ENCODE measurements at regions of chr10 and their contacts with region 1.

Region 1: DNA sequence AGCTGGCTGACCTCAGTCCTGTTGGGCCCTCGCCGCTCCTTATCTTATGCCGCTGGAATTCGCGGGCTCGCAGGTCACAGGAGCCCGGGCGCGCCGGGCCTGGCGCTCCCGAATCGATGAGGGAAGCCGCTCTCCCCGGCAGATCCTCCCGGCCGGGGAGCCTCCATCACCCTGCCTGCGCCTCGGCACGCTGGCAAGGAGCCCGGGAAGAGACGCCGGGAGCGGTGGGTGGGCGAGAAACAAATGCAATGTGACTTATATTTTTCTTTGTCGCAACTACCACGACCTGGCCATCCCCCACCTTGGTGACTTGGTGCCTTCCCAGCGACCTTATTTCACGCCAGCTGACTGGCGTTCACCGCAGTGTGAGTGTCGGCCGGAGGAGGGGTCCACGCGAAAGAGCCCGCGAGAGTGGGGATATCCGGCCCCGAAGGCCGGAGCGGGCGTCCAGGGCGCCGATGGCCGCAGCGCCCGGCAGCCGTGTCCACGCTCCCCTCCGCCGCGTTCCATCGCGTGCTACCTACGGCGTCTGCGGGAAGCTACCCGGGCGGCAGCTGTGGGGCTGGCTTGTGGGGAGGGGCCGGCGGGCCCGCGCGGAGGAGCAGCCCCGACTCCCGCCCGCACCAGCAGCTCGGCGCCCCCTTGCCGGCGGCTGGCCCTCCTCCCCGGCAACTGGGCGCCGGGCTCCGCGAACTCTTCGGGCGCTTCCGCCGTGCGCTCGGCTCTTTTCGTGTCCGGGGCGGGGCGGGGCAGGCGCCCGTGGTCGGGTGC is 494 bp upstream of the BMPR1A start:
- DNase-seq: peak; percentile 93

Region 2: GRCh38 chr10:86710987-86711512 is 44.9 kb before region 1 on chr10:
- intact Hi-C with region 1: loop called (anchors 1 kb)
- DNase-seq: peak; percentile 91

Region 3: DNA sequence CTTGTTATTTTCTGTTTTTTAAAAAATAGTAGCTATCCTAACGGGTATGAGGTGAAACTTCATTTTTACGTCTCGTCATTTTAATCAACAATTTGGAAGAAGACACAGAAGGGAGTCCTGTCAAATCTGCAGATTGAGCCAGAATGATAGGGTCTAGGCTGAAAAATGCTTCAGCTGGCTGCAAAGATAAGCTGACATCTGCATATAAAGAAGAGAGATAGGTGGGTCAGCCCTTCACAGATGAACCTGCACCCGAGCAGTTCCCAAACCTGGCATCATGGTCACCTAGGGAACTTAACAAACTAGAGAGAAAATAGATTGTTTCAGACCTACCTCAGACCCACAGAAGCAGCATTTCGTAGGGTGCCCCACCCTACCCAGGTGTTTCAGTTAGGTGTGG is 34.7 kb before region 1 on chr10:
- intact Hi-C with region 1: no loop called
- DNase-seq: peak; percentile 17

Region 4: GRCh38 chr10:86945361-86946212 is 189.7 kb after region 1 on chr10:
- intact Hi-C with region 1: no loop called
- DNase-seq: peak; percentile 75

Measured in cardiac septum (tissue), 1 donor.